Activated B cell treated with CpG ODN at 0.5 μM for 24 hours (primary cell): ENCODE measurements at regions of chr1 and their contacts with region 1.

Region 1: GRCh38 chr1:109984456-109985275 is at the start of gene AHCYL1:
- DNase-seq: peak; percentile 97
- ATAC-seq: peak; percentile 99
- H3K4me3 Mint-ChIP-seq: peak within 1 kb of the TSS; percentile 98
- H3K27ac Mint-ChIP-seq: peak within 1 kb of the TSS; percentile 93
- H3K4me1 Mint-ChIP-seq: peaks cover 37% of the 10 kb centered on the region
- H3K27me3 Mint-ChIP-seq: peaks cover 5% of the 10 kb centered on the region
- CTCF ChIP-seq: peak; percentile 56
- total RNA-seq, gene AHCYL1: 40.5 and 41.6 TPM in 2 replicates

Region 2: DNA sequence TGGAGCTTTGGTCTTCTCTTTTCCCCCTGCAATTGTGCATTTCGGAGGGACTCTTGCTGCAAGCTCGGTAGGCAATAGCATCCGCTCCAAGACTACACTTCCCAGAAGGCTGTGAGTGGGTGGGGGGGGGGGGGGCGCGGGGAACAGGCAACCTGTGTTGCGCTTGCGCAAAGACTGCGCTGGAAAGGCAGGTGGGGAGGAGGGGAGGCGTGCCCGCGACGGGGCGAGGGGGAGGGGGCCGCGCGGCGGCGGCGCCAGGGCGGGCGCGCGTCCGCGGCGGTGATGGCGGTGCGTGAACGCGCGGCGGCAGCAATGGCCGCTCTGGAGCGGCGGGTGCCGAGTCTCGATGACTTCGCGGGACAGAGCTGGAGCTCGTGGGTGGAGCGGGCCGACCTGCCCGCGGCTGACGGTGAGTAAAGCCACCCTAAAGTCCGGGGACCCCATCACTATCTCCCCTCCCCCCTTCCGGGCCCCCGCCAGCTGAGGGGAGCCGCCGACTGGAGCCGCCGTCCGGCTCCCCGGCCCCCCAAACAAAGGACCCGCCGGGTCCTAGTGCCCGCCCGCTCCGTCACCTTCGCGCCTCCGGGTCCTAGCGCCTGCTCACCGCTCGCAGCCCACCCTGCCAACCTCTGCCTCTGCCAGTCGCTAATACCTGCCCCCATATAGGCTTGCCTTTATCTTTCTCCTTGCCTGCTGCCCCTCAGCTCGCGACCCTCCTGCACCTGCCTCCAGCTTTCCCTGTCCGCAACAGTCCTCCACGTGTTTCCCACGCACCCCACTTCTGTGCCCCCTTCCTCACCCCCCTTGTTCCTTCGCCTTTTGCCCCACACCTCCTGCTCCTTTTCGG is 500.8 kb before region 1 on chr1 and contains the start of gene ATXN7L2:
- CTCF ChIA-PET with region 1: no interaction called
- POLR2A ChIA-PET with region 1: no interaction called
- intact Hi-C with region 1: loop called (anchors 1 kb)
- DNase-seq: peak; percentile 90
- ATAC-seq: peak; percentile 79
- H3K4me3 Mint-ChIP-seq: peak within 1 kb of the TSS; percentile 94
- H3K27ac Mint-ChIP-seq: peak within 1 kb of the TSS; percentile 91
- H3K4me1 Mint-ChIP-seq: peaks cover 27% of the 10 kb centered on the region
- H3K27me3 Mint-ChIP-seq: peaks cover 16% of the 10 kb centered on the region
- CTCF ChIP-seq: no peak
- total RNA-seq, gene ATXN7L2: 7.5 and 9.0 TPM in 2 replicates

Region 3: GRCh38 chr1:109739738-109740660 is 244.7 kb before region 1 on chr1:
- CTCF ChIA-PET with region 1: no interaction called
- POLR2A ChIA-PET with region 1: no interaction called
- intact Hi-C with region 1: loop called (anchors 1 kb)
- DNase-seq: peak; percentile 72
- ATAC-seq: peak; percentile 97
- H3K4me3 Mint-ChIP-seq: peak overlapping the region; percentile 82
- H3K27ac Mint-ChIP-seq: no peak overlapping the region
- H3K4me1 Mint-ChIP-seq: peaks cover 13% of the 10 kb centered on the region
- H3K27me3 Mint-ChIP-seq: peaks cover 24% of the 10 kb centered on the region
- CTCF ChIP-seq: no peak

Region 4: DNA sequence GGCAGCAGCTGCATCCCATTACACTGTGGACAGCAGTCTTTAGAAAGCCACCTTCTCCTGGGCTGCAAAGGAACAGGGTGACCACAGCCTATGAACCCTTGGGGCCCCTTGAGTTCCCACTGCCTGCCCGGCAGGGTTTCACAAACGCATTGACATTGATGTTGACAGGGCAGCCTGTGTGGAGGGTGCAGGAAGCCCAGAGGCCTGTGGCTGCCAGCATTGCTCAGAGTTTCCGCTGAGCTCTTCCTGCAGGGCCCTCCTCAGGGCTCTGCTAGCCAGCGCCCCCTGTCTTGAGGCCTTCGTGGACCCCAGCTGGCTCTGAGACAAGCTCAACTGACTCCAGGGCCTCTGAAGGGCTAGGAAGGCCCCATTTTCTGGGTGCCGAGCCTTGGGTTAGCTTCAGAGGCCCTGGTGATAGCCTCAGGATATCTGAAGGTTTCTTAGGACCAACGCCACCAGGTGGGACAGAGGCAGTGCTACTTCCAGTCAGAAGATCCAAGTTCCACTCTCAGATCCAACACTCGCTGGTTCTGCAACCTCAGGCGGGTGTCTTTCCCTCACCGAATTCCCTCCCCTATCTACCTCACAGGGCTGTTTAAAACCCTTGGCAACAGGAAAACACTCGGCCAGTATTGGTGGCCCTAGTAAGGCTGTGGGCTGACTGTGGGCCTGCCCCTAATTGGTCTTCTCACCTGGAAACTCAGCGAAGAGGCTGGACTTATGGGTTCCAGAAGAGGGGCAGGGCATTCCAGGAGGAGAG is 193.8 kb before region 1 on chr1:
- CTCF ChIA-PET with region 1: interaction called, 379 read pairs
- POLR2A ChIA-PET with region 1: no interaction called
- intact Hi-C with region 1: no loop called
- DNase-seq: no peak
- ATAC-seq: peak; percentile 89
- H3K4me3 Mint-ChIP-seq: no peak overlapping the region
- H3K27ac Mint-ChIP-seq: no peak overlapping the region
- H3K4me1 Mint-ChIP-seq: peaks cover 5% of the 10 kb centered on the region
- H3K27me3 Mint-ChIP-seq: peaks cover 8% of the 10 kb centered on the region
- CTCF ChIP-seq: no peak

Region 5: GRCh38 chr1:109840011-109840629 is 144.5 kb before region 1 on chr1:
- CTCF ChIA-PET with region 1: no interaction called
- POLR2A ChIA-PET with region 1: no interaction called
- intact Hi-C with region 1: no loop called
- DNase-seq: no peak
- ATAC-seq: no peak
- H3K4me3 Mint-ChIP-seq: no peak overlapping the region
- H3K27ac Mint-ChIP-seq: no peak overlapping the region
- H3K4me1 Mint-ChIP-seq: no peaks in the 10 kb centered on the region
- H3K27me3 Mint-ChIP-seq: peaks cover 7% of the 10 kb centered on the region
- CTCF ChIP-seq: no peak

Region 6: GRCh38 chr1:109877320-109877771 is 107.3 kb before region 1 on chr1:
- CTCF ChIA-PET with region 1: no interaction called
- POLR2A ChIA-PET with region 1: no interaction called
- intact Hi-C with region 1: no loop called
- DNase-seq: no peak
- ATAC-seq: peak; percentile 48
- H3K4me3 Mint-ChIP-seq: peak overlapping the region; percentile 46
- H3K27ac Mint-ChIP-seq: no peak overlapping the region
- H3K4me1 Mint-ChIP-seq: peaks cover 22% of the 10 kb centered on the region
- H3K27me3 Mint-ChIP-seq: peaks cover 19% of the 10 kb centered on the region
- CTCF ChIP-seq: no peak

Region 7: GRCh38 chr1:109910123-109910962 is 74.3 kb before region 1 on chr1 and contains the start of gene CSF1:
- CTCF ChIA-PET with region 1: interaction called, 4 read pairs
- POLR2A ChIA-PET with region 1: interaction called, 3 read pairs
- intact Hi-C with region 1: loop called (anchors 1 kb)
- DNase-seq: peak; percentile 40
- ATAC-seq: peak; percentile 23
- H3K4me3 Mint-ChIP-seq: peak within 1 kb of the TSS; percentile 85
- H3K27ac Mint-ChIP-seq: peak within 1 kb of the TSS; percentile 51
- H3K4me1 Mint-ChIP-seq: peaks cover 37% of the 10 kb centered on the region
- H3K27me3 Mint-ChIP-seq: peaks cover 38% of the 10 kb centered on the region
- CTCF ChIP-seq: no peak
- total RNA-seq, gene CSF1: 1.9 and 2.0 TPM in 2 replicates

Region 8: DNA sequence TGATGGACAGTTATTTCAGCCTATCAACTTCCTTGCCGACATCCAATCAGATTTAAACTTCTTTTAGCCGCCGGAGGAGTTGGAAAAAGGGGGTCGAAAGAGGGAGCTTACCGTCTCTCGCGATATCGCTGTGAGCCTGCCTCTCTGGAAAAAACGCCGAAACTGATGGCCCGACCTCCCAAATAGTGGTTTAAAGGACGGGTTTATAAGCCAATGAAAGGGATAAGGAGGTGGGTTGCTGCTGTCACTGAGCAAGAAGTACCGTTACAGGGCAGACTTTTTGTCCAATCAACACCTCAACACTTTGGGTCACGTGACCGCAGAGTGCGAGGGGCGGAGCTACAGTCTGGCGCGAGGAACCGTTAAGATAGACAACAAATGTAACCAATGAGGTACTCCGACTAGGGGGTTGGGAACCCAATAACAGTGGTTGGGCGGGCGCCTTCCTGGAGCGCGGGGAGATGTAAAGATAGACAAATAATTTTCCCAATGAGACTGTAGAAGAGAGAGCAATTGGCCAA is 354.3 kb after region 1 on chr1 and contains the start of gene RBM15:
- CTCF ChIA-PET with region 1: no interaction called
- POLR2A ChIA-PET with region 1: no interaction called
- intact Hi-C with region 1: no loop called
- DNase-seq: peak; percentile 82
- ATAC-seq: peak; percentile 72
- H3K4me3 Mint-ChIP-seq: no peak within 1 kb of the TSS
- H3K27ac Mint-ChIP-seq: no peak within 1 kb of the TSS
- H3K4me1 Mint-ChIP-seq: peaks cover 51% of the 10 kb centered on the region
- H3K27me3 Mint-ChIP-seq: no peaks in the 10 kb centered on the region
- CTCF ChIP-seq: no peak
- total RNA-seq, gene RBM15: 52.7 and 61.1 TPM in 2 replicates